Activated B cell treated with CpG ODN at 0.5 μM for 24 hours (primary cell): ENCODE measurements at regions of chr12 and their contacts with region 1.

Region 1: DNA sequence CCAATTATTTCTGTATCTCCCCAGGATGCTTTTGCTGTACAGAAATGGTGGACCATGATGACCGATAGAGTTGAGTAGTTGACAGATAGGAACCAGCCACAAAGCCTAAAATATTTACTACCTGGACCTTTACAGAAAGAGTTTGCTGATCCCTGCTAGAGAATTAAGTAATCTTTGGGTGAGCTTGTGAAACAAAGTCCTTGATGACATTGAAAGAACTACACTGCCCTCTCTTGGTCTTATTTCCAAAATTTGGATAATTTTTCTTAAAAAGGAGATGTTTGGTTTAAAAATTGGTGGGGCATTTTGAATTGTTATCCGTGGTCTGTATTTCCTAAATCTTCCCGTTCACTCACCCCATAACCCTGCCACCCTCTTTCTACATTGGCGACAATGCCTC is 13.7 kb upstream of the TCTN1 start:
- DNase-seq: no peak
- ATAC-seq: peak; percentile 54
- H3K4me3 Mint-ChIP-seq: no peak overlapping the region
- H3K27ac Mint-ChIP-seq: peak overlapping the region; percentile 69
- H3K4me1 Mint-ChIP-seq: peaks cover 44% of the 10 kb centered on the region
- H3K27me3 Mint-ChIP-seq: no peaks in the 10 kb centered on the region
- CTCF ChIP-seq: no peak

Region 2: DNA sequence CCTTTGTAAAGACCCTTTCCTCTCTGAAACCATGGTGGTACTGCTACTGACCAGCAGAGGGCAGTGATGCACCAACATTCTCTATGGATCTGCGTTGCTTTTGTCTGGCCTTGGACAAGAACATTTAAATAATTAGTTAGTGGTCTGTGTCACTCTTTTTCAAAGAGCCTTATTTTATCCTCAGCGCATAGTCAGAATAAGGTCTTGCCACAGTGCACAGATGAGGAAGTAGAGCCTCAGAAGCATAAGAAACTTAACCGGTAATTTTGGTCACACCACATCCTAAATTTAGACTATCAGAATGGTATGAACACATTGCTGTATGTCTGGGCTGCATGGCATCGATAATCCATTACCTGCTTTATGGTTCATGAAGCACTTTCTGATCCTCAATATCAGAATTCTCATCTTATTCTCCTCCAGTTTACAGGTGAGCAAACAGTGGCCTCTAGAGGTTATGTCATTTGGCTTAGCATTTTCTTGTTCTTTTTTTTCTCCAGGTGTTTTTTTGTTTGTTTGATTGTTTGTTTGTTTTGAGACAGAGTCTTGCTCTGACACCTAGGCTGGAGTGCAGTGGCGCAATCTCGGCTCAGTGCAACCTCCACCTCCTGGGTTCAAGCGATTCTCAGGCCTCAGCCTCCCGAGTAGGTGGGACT is 499.8 kb before region 1 on chr12:
- CTCF ChIA-PET with region 1: interaction called, 3 read pairs
- POLR2A ChIA-PET with region 1: no interaction called
- intact Hi-C with region 1: loop called (anchors 2 kb)
- DNase-seq: peak; percentile 41
- ATAC-seq: peak; percentile 96
- H3K4me3 Mint-ChIP-seq: peak overlapping the region; percentile 50
- H3K27ac Mint-ChIP-seq: peak overlapping the region; percentile 80
- H3K4me1 Mint-ChIP-seq: peaks cover 23% of the 10 kb centered on the region
- H3K27me3 Mint-ChIP-seq: no peaks in the 10 kb centered on the region
- CTCF ChIP-seq: peak; percentile 55

Region 3: DNA sequence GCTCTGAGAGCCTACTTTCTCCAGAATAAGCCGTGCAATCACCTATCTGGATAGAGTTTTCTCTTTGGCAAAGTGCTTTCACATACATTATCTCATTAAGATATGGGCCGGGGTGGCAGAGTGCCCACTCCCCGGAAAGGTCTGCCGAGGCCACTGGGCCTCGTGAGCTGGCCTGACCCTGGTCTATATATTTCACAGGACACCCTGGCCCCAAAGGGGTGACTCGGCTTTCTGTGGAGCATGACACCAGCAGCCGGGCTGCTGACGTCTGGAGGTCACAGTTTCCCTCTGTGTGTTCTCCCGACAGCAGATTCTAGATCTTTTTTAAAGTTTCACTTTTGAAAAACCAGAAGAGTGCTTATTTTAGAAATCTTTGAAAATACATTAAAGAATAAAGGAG is 347.1 kb before region 1 on chr12:
- CTCF ChIA-PET with region 1: no interaction called
- POLR2A ChIA-PET with region 1: no interaction called
- intact Hi-C with region 1: no loop called
- DNase-seq: no peak
- ATAC-seq: no peak
- H3K4me3 Mint-ChIP-seq: no peak overlapping the region
- H3K27ac Mint-ChIP-seq: no peak overlapping the region
- H3K4me1 Mint-ChIP-seq: no peaks in the 10 kb centered on the region
- H3K27me3 Mint-ChIP-seq: no peaks in the 10 kb centered on the region
- CTCF ChIP-seq: no peak

Region 4: DNA sequence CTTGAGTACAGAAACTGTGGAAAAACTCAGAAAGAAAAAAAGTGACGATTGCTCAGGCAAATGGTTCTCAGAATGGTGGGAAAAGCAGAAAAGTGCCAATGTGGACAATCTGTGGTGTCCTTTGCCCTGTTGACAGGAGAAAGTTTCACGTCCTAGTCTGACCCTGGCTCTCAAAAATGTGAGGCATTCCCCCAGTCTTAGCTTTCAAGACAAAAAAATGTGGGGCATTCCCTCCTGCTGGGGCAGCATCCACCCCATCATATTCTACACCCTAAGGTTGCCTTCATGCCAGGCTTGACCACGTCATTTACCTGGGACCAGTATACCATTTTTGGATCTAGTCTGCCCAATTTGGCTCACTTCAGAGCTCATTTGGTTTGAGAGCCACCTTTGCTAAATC is 176.0 kb before region 1 on chr12:
- CTCF ChIA-PET with region 1: no interaction called
- POLR2A ChIA-PET with region 1: no interaction called
- intact Hi-C with region 1: no loop called
- DNase-seq: no peak
- ATAC-seq: no peak
- H3K4me3 Mint-ChIP-seq: no peak overlapping the region
- H3K27ac Mint-ChIP-seq: no peak overlapping the region
- H3K4me1 Mint-ChIP-seq: no peaks in the 10 kb centered on the region
- H3K27me3 Mint-ChIP-seq: no peaks in the 10 kb centered on the region
- CTCF ChIP-seq: no peak

Region 5: GRCh38 chr12:110513842-110514241 is 86.4 kb before region 1 on chr12:
- CTCF ChIA-PET with region 1: interaction called, 73 read pairs
- POLR2A ChIA-PET with region 1: interaction called, 4 read pairs
- intact Hi-C with region 1: loop called (anchors 1 kb)
- DNase-seq: no peak
- ATAC-seq: no peak
- H3K4me3 Mint-ChIP-seq: no peak overlapping the region
- H3K27ac Mint-ChIP-seq: no peak overlapping the region
- H3K4me1 Mint-ChIP-seq: no peaks in the 10 kb centered on the region
- H3K27me3 Mint-ChIP-seq: no peaks in the 10 kb centered on the region
- CTCF ChIP-seq: no peak

Region 6: DNA sequence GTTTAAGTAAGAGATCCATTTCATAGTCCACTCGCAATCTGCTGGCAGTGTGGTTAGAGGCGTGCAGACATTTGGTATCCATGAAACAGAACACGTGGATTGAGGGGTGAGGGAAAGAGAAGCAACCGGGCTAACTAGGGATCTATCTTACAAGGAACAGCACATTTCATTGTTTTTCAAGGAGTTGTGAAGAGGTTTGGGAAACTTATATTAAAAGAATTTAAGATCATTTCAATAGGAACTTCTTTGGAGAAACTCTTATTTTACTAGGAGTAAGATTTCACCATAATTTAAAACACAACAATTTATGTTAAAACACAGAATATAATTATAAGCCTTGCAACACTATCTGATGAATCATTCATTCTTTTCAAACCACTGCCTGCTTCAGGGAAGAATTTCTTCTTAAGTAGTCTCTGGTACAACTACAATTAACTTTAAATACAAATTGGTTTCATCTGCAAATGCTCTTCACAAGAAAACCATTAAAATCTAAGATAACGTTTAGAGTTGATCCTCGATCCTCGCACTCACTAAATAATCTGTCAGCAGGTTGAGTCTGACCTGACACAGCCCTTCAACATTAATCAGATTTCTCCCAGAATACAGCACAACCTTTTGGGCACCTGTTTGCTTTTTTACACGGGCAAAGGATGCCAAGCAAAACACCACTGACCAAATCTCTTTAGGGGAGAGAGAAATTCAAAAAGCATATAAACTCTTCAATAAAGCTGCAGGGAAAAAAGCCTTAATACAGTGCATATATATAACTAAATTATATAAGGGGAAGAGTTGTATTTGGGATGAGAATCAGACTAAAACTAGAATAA is 44.5 kb before region 1 on chr12:
- CTCF ChIA-PET with region 1: interaction called, 104 read pairs
- POLR2A ChIA-PET with region 1: interaction called, 4 read pairs
- intact Hi-C with region 1: loop called (anchors 1 kb)
- DNase-seq: no peak
- ATAC-seq: no peak
- H3K4me3 Mint-ChIP-seq: no peak overlapping the region
- H3K27ac Mint-ChIP-seq: no peak overlapping the region
- H3K4me1 Mint-ChIP-seq: peaks cover 63% of the 10 kb centered on the region
- H3K27me3 Mint-ChIP-seq: no peaks in the 10 kb centered on the region
- CTCF ChIP-seq: no peak

Region 7: GRCh38 chr12:110613771-110614684 is 13.8 kb after region 1 on chr12 and contains the start of gene TCTN1:
- CTCF ChIA-PET with region 1: interaction called, 23 read pairs
- POLR2A ChIA-PET with region 1: interaction called, 34 read pairs
- intact Hi-C with region 1: loop called (anchors 1 kb)
- DNase-seq: peak; percentile 95
- ATAC-seq: peak; percentile 98
- H3K4me3 Mint-ChIP-seq: peak within 1 kb of the TSS; percentile 89
- H3K27ac Mint-ChIP-seq: peak within 1 kb of the TSS; percentile 94
- H3K4me1 Mint-ChIP-seq: peaks cover 57% of the 10 kb centered on the region
- H3K27me3 Mint-ChIP-seq: no peaks in the 10 kb centered on the region
- CTCF ChIP-seq: no peak
- total RNA-seq, gene TCTN1: 22.4 and 29.5 TPM in 2 replicates

Region 8: GRCh38 chr12:110826592-110827200 is 226.4 kb after region 1 on chr12:
- CTCF ChIA-PET with region 1: interaction called, 7 read pairs
- POLR2A ChIA-PET with region 1: no interaction called
- intact Hi-C with region 1: loop called (anchors 1 kb)
- DNase-seq: peak; percentile 74
- ATAC-seq: peak; percentile 99
- H3K4me3 Mint-ChIP-seq: peak overlapping the region; percentile 80
- H3K27ac Mint-ChIP-seq: peak overlapping the region; percentile 41
- H3K4me1 Mint-ChIP-seq: peaks cover 6% of the 10 kb centered on the region
- H3K27me3 Mint-ChIP-seq: peaks cover 4% of the 10 kb centered on the region
- CTCF ChIP-seq: no peak